Activated T-helper 2 cell treated with anti-CD3 and anti-CD28 coated beads, Interferon-gamma antibody, Interleukin-2, Interleukin-4, amounts not matched to agents 10 μg/mL and 5 μg/mL and 100 μg/mL, durations not matched to agents 14 hours and 24 hours and 36 hours (primary cell): ENCODE measurements at regions of chr4 and their contacts with region 1.

Region 1: GRCh38 chr4:110287130-110287529 is 88.7 kb upstream of the ELOVL6 start:
- DNase-seq: no peak
- H3K4me3 Mint-ChIP-seq: no peak overlapping the region
- H3K27ac Mint-ChIP-seq: peak overlapping the region; percentile 69
- H3K4me1 Mint-ChIP-seq: peaks cover 13% of the 10 kb centered on the region
- H3K27me3 Mint-ChIP-seq: peaks cover 39% of the 10 kb centered on the region

Region 2: DNA sequence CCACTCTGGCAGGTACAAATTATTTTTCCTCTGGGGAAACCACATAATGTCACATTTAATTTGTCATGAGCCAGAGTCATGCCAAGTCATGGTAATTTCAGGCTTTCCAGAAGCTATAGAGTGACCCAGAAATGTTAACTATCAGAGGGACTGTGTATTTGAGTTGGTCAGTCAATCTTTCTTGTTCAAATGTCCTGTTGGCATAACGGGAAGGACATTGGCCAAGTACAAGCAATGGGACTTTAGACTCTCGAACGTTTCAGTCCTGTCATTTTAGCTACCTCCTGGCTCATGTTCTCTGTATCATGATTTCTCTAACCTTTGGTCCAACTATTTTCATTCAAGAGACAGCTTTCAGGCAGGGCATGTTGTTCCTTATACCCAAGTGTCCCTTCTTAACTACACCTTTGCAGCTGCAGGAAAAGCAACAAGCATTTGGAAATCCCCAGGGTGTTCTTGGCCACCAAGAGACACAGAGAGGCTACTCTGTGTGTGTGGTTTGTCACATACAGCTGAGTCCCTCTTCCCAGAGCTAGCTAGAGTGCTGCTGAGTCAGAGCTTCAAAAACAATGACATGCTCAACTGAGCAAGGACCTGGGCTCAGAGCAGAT is 231.9 kb before region 1 on chr4:
- intact Hi-C with region 1: loop called (anchors 5 kb)
- DNase-seq: peak; percentile 16
- H3K4me3 Mint-ChIP-seq: peak overlapping the region; percentile 18
- H3K27ac Mint-ChIP-seq: peak overlapping the region; percentile 48
- H3K4me1 Mint-ChIP-seq: peaks cover 45% of the 10 kb centered on the region
- H3K27me3 Mint-ChIP-seq: no peaks in the 10 kb centered on the region

Region 3: DNA sequence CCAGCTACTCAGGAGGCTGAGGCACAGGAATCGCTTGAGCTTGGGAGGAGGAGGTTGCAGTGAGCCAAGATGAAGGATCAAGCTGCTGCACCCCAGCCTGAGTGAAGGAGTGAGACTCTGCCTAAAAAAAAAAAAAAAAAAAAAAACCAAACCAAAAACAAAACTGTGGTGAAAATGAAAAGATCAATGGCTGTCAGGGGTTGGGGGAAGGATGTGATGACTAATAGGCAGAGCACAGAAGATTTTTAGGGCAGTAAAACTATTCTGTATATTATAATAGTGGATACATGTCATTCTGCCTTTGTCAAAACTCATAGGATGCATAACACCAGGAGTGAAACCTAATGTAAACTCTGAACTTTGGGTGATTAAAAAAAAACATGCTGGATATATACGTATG is 18.8 kb before region 1 on chr4:
- intact Hi-C with region 1: loop called (anchors 1 kb)
- DNase-seq: no peak
- H3K4me3 Mint-ChIP-seq: no peak overlapping the region
- H3K27ac Mint-ChIP-seq: no peak overlapping the region
- H3K4me1 Mint-ChIP-seq: peaks cover 11% of the 10 kb centered on the region
- H3K27me3 Mint-ChIP-seq: peaks cover 20% of the 10 kb centered on the region

Region 4: GRCh38 chr4:110371016-110371770 is 84.1 kb after region 1 on chr4:
- intact Hi-C with region 1: no loop called
- DNase-seq: no peak
- H3K4me3 Mint-ChIP-seq: no peak overlapping the region
- H3K27ac Mint-ChIP-seq: no peak overlapping the region
- H3K4me1 Mint-ChIP-seq: no peaks in the 10 kb centered on the region
- H3K27me3 Mint-ChIP-seq: peaks cover 2% of the 10 kb centered on the region